Panc1 (cell line): ENCODE measurements at regions of chr9 and their contacts with region 1.

Region 1: GRCh38 chr9:79565245-79565644 is 6.5 kb upstream of the TLE4 start:
- DNase-seq: no peak
- ATAC-seq: no peak
- H3K4me3 ChIP-seq: no peak overlapping the region
- H3K27ac ChIP-seq: no peak overlapping the region
- H3K4me1 ChIP-seq: no peaks in the 10 kb centered on the region
- H3K27me3 ChIP-seq: no peaks in the 10 kb centered on the region
- CTCF ChIP-seq: no peak

Region 2: GRCh38 chr9:79129865-79130480 is 435.3 kb before region 1 on chr9:
- CTCF ChIA-PET with region 1: no interaction called
- POLR2A ChIA-PET with region 1: no interaction called
- in situ Hi-C with region 1: no loop called
- intact Hi-C with region 1: loop called (anchors 2 kb)
- DNase-seq: peak; percentile 2
- ATAC-seq: no peak
- H3K4me3 ChIP-seq: no peak overlapping the region
- H3K27ac ChIP-seq: no peak overlapping the region
- H3K4me1 ChIP-seq: no peaks in the 10 kb centered on the region
- H3K27me3 ChIP-seq: no peaks in the 10 kb centered on the region
- CTCF ChIP-seq: peak; percentile 82

Region 3: DNA sequence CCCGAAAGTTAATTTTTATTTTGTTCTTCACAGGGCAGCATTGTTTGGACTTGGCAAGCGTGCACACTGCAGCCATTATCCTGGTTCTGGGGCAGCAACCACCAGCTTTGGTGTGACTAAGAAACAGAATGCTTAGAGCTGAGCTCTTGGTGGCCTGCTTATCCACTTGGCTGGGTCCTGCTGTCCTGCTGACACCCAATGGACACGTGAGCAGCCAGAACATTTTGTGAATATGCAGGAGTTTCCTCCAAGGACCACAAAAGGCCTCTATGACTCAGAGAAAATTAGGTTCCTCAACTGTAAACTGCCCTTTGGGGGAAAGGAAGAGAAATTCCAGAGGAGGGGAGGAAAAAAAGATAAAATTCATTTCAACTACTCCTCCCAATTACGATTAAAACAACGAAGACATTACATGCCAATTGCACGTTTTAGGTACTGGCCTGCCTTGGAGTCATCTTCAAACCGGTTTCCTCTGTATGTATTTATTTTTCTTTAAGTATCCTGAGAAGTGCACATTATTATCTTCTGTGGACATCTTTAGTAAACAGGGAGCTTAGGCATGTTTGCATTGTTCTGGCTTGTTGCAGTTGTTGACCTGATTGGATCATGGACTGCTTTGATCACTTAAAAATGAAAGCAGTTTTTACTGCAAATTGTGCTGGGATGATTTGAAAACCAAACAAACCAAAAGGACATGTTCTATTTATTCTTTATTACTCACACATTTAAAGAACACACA is 75.8 kb before region 1 on chr9:
- CTCF ChIA-PET with region 1: no interaction called
- POLR2A ChIA-PET with region 1: interaction called, 3 read pairs
- in situ Hi-C with region 1: no loop called
- intact Hi-C with region 1: loop called (anchors 10 kb)
- DNase-seq: no peak
- ATAC-seq: peak; percentile 74
- H3K4me3 ChIP-seq: no peak overlapping the region
- H3K27ac ChIP-seq: no peak overlapping the region
- H3K4me1 ChIP-seq: no peaks in the 10 kb centered on the region
- H3K27me3 ChIP-seq: no peaks in the 10 kb centered on the region
- CTCF ChIP-seq: no peak